ENCODE measurements at regions of chr11 and their contacts with region 1.

Region 1: GRCh38 chr11:72962084-72962483 is 147.9 kb downstream of the ATG16L2 start:
- DNase-seq: no peak
- ATAC-seq: no peak
- H3K4me3 ChIP-seq: no peak overlapping the region
- H3K4me3 Mint-ChIP-seq: no peak overlapping the region
- H3K27ac ChIP-seq: no peak overlapping the region
- H3K27ac Mint-ChIP-seq: no peak overlapping the region
- H3K4me1 ChIP-seq: no peaks in the 10 kb centered on the region
- H3K4me1 Mint-ChIP-seq: no peaks in the 10 kb centered on the region
- H3K27me3 ChIP-seq: no peaks in the 10 kb centered on the region
- H3K27me3 Mint-ChIP-seq: no peaks in the 10 kb centered on the region
- CTCF ChIP-seq: no peak

Region 2: GRCh38 chr11:72975778-72976521 is 13.9 kb after region 1 on chr11:
- CTCF ChIA-PET with region 1: no interaction called
- POLR2A ChIA-PET with region 1: no interaction called
- intact Hi-C with region 1: no loop called
- DNase-seq: peak in 3 of 14 experiments; percentile 23 to 37 (median 24)
- ATAC-seq: no peak
- H3K4me3 ChIP-seq: no peak overlapping the region
- H3K4me3 Mint-ChIP-seq: no peak overlapping the region
- H3K27ac ChIP-seq: no peak overlapping the region
- H3K27ac Mint-ChIP-seq: no peak overlapping the region
- H3K4me1 ChIP-seq: no peaks in the 10 kb centered on the region
- H3K4me1 Mint-ChIP-seq: peaks cover 19% of the 10 kb centered on the region
- H3K27me3 ChIP-seq: no peaks in the 10 kb centered on the region
- H3K27me3 Mint-ChIP-seq: no peaks in the 10 kb centered on the region
- CTCF ChIP-seq: no peak

Region 3: DNA sequence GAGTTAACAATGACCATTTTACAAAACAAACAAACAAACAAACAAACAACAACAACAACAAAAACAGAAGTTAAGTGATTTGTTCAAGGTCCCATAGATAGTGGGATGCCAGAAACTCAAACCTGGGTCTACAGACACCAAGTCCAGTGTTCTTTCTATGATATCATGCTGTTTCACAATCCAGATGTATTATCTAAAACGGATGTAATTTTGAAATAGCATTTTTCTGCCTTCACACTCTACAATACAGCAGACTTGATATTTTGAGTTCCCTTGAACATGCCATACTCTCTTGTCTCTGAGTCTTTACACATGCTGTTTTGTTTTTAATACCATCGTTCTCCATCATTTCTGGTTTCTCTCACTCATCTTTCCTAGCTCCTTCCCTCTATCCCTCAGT is 518.6 kb after region 1 on chr11:
- CTCF ChIA-PET with region 1: no interaction called
- POLR2A ChIA-PET with region 1: no interaction called
- intact Hi-C with region 1: loop called in 1 of 2 experiments (anchors 5 kb)
- DNase-seq: no peak
- ATAC-seq: no peak
- H3K4me3 ChIP-seq: no peak overlapping the region
- H3K4me3 Mint-ChIP-seq: no peak overlapping the region
- H3K27ac ChIP-seq: no peak overlapping the region
- H3K27ac Mint-ChIP-seq: peak overlapping the region; percentile 4
- H3K4me1 ChIP-seq: no peaks in the 10 kb centered on the region
- H3K4me1 Mint-ChIP-seq: peaks cover 6% of the 10 kb centered on the region
- H3K27me3 ChIP-seq: no peaks in the 10 kb centered on the region
- H3K27me3 Mint-ChIP-seq: no peaks in the 10 kb centered on the region
- CTCF ChIP-seq: no peak